Common myeloid progenitor, CD34-positive (primary cell): ENCODE measurements at regions of chr12 and their contacts with region 1.

Region 1: DNA sequence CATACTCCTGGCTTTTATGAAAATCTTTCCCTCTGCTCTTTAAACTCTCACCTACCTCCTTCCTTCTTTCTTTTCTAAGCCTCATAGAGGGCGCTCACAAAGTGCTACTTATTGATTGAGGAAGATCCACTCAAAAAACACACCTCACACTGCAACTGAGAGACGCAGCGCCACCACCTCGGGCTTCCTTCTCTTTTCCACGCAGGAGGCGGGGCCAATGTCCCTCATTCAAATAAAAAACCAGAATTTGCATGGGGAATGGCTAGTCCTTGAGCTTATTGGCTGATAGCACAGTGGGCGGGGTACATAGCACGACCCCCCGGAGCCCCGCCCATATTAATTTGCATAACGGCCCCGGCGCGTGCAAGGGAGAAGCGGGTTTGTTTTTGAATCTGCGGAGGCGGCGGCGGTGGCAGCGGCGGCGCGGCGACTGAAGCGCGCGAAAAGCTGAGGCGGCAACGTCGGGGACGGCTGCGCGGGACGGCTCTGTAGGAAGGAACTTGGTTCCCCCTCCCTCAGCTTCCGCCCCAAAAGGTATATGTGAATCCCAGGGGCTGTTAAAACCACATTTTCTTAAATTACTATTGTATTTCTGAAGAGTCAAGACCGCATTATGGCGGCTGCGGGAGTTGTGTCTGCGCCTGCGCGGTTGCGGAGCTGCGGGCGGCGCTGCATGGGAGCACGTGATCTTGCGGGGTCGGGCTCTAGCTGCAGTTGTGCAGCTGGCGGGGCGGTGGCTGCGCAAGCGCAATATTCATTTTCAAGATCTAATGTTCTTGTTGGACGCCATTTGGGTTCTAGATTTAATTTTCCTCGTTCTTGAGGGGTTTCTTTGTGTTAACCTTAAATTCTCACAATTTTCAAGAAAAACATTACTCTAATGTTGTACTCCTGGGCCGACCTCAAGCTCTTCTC is at the start of gene ATF7IP:
- DNase-seq: peak; percentile 99 to 100 (median 99)
- H3K4me3 ChIP-seq: peak within 1 kb of the TSS; percentile 74 to 91 (median 84)
- H3K27ac ChIP-seq: peak within 1 kb of the TSS; percentile 90 to 96
- H3K4me1 ChIP-seq: peaks cover 8 to 23% (median 13%) of the 10 kb centered on the region in 4 experiments
- H3K27me3 ChIP-seq: no peaks in the 10 kb centered on the region

Region 2: GRCh38 chr12:14257734-14258574 is 107.6 kb before region 1 on chr12:
- CTCF ChIA-PET with region 1: interaction called, 20 read pairs
- POLR2A ChIA-PET with region 1: interaction called, 5 read pairs
- DNase-seq: peak; percentile 93 to 98 (median 96)
- H3K4me3 ChIP-seq: peak overlapping the region in 3 of 7 experiments; percentile 32 to 67 (median 43)
- H3K27ac ChIP-seq: peak overlapping the region; percentile 66 to 88
- H3K4me1 ChIP-seq: peaks cover 24 to 52% (median 36%) of the 10 kb centered on the region in 4 experiments
- H3K27me3 ChIP-seq: no peaks in the 10 kb centered on the region

Region 3: DNA sequence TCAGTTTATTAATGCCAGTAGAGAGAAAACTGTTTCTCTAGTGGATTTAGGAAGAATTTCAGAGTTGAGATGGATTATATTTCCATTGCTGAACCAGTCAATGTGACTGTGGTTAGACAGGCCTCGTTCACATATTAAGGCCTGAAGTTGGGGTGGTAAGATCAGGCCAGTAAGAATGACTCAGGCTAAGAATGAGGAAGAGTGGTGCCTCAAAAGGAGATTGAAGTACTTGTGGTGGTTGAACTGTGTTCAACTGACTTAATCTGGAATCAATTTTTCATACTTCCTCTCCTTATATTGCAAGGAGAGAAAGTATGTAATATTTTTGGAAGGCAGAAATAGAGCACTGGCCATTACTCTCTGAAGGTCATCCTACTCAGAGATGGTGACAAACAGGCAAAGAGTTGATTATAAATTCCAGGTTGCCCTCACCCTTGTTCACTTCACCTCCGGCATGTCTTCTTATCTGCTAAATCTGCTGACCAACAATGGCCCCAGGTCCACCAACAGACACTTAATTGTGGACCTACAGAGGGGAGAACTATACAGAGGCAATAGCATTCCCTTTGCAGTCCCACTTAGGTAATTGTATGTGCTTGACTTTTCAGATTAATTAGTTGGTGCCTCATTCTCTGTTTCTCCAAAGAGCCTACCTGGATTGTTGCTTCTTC is 37.7 kb before region 1 on chr12:
- CTCF ChIA-PET with region 1: no interaction called
- POLR2A ChIA-PET with region 1: no interaction called
- DNase-seq: peak; percentile 53 to 94 (median 89)
- H3K4me3 ChIP-seq: no peak overlapping the region
- H3K27ac ChIP-seq: peak overlapping the region in 1 of 2 experiments; percentile 41
- H3K4me1 ChIP-seq: peaks cover 0 to 6% (median 4%) of the 10 kb centered on the region in 4 experiments
- H3K27me3 ChIP-seq: no peaks in the 10 kb centered on the region

Region 4: GRCh38 chr12:14340371-14340770 is 25.2 kb before region 1 on chr12:
- CTCF ChIA-PET with region 1: no interaction called
- POLR2A ChIA-PET with region 1: no interaction called
- DNase-seq: no peak
- H3K4me3 ChIP-seq: no peak overlapping the region
- H3K27ac ChIP-seq: no peak overlapping the region
- H3K4me1 ChIP-seq: no peaks in the 10 kb centered on the region
- H3K27me3 ChIP-seq: no peaks in the 10 kb centered on the region

Region 5: GRCh38 chr12:14384783-14385638 is 19.5 kb after region 1 on chr12:
- CTCF ChIA-PET with region 1: interaction called, 39 read pairs
- POLR2A ChIA-PET with region 1: no interaction called
- DNase-seq: peak; percentile 87 to 97 (median 96)
- H3K4me3 ChIP-seq: peak overlapping the region in 3 of 7 experiments; percentile 36 to 42 (median 42)
- H3K27ac ChIP-seq: peak overlapping the region in 1 of 2 experiments; percentile 62
- H3K4me1 ChIP-seq: peaks cover 0 to 21% (median 2%) of the 10 kb centered on the region in 4 experiments
- H3K27me3 ChIP-seq: no peaks in the 10 kb centered on the region

Region 6: DNA sequence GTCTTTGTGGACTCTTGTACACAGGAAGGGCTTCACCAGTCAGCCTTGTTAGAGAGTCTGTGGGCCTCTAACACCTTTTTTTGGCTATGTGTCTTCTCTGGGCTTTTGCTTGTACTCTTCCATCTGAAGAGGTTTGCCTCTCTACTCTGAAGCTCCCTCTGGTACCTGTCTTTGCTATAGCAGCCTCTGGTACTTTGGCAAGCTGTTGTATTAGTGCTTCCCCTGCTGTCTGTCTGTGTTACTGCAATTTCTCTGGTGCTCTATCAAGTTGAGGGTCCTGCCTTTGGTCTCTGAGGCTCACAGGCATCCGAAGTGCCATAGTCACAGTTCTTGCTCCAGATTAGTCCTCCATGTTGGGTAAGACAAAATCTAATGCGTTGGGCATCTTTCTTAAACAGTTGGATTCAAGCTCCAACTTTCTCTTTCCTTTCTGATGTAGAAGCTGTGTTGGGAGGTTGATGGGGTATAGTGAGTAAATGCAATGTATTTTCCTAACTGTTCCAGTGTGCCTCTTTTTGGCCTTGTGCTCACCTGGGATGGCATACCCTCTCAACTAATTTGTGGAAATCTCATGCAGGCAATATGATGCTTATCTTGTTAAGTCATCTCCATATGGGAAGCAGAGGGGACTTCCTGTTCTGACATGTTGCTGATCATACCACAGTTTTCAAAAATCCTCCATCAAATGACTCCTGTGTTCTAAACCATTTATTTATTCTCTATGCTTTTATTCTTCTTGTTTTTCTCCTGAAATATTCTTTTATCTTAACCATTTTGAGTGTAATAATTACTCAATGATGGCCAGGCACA is 88.8 kb after region 1 on chr12:
- CTCF ChIA-PET with region 1: interaction called, 25 read pairs
- POLR2A ChIA-PET with region 1: interaction called, 4 read pairs
- DNase-seq: peak; percentile 79 to 87 (median 83)
- H3K4me3 ChIP-seq: no peak overlapping the region
- H3K27ac ChIP-seq: no peak overlapping the region
- H3K4me1 ChIP-seq: peaks cover 0 to 6% (median 0%) of the 10 kb centered on the region in 4 experiments
- H3K27me3 ChIP-seq: no peaks in the 10 kb centered on the region

Region 7: GRCh38 chr12:14514154-14514842 is 148.7 kb after region 1 on chr12:
- CTCF ChIA-PET with region 1: no interaction called
- POLR2A ChIA-PET with region 1: no interaction called
- DNase-seq: peak; percentile 40 to 68 (median 67)
- H3K4me3 ChIP-seq: no peak overlapping the region
- H3K27ac ChIP-seq: no peak overlapping the region
- H3K4me1 ChIP-seq: no peaks in the 10 kb centered on the region
- H3K27me3 ChIP-seq: no peaks in the 10 kb centered on the region

Region 8: DNA sequence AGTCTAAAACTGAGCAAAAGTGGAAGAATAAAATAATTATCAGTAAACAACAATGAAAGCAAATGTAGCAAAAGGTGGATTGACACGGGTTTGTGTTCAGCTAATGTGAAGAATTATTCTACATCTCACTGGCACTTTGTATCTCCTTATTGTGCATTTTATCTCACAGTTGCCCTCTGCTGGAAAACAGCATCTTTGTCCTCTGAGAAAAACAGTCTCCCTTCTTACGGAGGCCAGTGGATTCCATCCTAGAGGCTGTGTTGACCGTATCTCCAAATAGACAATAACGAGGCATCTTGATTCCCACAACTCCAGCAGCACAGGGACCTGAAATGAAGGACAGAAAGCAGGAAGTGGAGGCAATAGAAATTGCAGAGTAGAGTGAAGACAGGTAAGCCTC is 253.4 kb after region 1 on chr12:
- CTCF ChIA-PET with region 1: no interaction called
- POLR2A ChIA-PET with region 1: no interaction called
- DNase-seq: peak; percentile 31 to 53 (median 42)
- H3K4me3 ChIP-seq: no peak overlapping the region
- H3K27ac ChIP-seq: no peak overlapping the region
- H3K4me1 ChIP-seq: peaks cover 0 to 3% (median 1%) of the 10 kb centered on the region in 4 experiments
- H3K27me3 ChIP-seq: peaks cover 0 to 2% (median 0%) of the 10 kb centered on the region in 5 experiments